ENCODE measurements at regions of chr3 and their contacts with region 1.

Region 1: GRCh38 chr3:78659386-78659987 is 1108.3 kb downstream of the ROBO1 start:
- DNase-seq: peak; percentile 57
- ATAC-seq: no peak
- H3K4me3 ChIP-seq: no peak overlapping the region
- H3K27ac ChIP-seq: no peak overlapping the region
- H3K4me1 ChIP-seq: no peaks in the 10 kb centered on the region
- H3K27me3 ChIP-seq: no peaks in the 10 kb centered on the region
- CTCF ChIP-seq: peak; percentile 71
- POLR2A ChIP-seq: no peak
- RAD21 ChIP-seq: peak; percentile 77

Region 2: DNA sequence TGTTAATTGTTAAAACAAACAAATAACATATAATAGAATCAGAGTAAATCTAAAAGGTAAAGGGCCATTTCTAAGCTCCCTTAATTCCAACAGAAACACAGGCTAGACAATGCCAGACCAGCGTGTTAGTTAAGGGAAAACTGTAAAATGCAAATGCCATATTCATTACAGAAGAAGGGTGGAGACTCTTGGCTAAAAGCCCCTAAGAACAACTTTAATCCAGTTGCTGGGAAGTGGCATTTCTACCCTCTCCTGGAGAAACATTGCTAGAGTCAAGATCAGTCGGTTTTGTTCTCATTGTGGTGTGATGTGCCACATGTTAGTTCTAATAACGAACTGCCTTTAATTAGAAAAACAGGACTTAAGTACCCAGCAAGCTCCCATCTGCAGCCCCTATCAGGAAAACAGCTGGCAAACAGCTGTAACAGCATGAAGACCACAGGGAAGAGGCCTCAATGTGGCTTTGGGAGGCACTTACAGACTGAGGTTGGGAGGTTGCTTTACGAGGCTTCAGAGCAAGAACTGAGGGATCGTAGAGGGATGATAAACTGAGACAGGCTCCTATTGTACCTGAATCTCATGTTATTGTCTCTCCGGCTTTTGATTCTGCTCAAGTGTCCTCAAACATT is 26.4 kb before region 1 on chr3:
- CTCF ChIA-PET with region 1: no interaction called
- POLR2A ChIA-PET with region 1: interaction called, 11 read pairs
- dilution Hi-C with region 1: no loop called
- in situ Hi-C with region 1: no loop called
- intact Hi-C with region 1: no loop called
- DNase-seq: no peak
- ATAC-seq: no peak
- H3K4me3 ChIP-seq: no peak overlapping the region
- H3K27ac ChIP-seq: no peak overlapping the region
- H3K4me1 ChIP-seq: no peaks in the 10 kb centered on the region; the same call in 1 of the 2 replicates
- H3K27me3 ChIP-seq: no peaks in the 10 kb centered on the region
- CTCF ChIP-seq: no peak
- POLR2A ChIP-seq: no peak
- RAD21 ChIP-seq: no peak

Region 3: GRCh38 chr3:78754066-78754743 is 94.7 kb after region 1 on chr3:
- CTCF ChIA-PET with region 1: no interaction called
- POLR2A ChIA-PET with region 1: no interaction called
- dilution Hi-C with region 1: no loop called
- in situ Hi-C with region 1: no loop called
- intact Hi-C with region 1: no loop called
- DNase-seq: peak; percentile 73
- ATAC-seq: peak; percentile 78
- H3K4me3 ChIP-seq: no peak overlapping the region
- H3K27ac ChIP-seq: no peak overlapping the region
- H3K4me1 ChIP-seq: peaks cover 3% of the 10 kb centered on the region; the same call in 1 of the 2 replicates
- H3K27me3 ChIP-seq: no peaks in the 10 kb centered on the region
- CTCF ChIP-seq: no peak
- POLR2A ChIP-seq: no peak
- RAD21 ChIP-seq: no peak

Region 4: DNA sequence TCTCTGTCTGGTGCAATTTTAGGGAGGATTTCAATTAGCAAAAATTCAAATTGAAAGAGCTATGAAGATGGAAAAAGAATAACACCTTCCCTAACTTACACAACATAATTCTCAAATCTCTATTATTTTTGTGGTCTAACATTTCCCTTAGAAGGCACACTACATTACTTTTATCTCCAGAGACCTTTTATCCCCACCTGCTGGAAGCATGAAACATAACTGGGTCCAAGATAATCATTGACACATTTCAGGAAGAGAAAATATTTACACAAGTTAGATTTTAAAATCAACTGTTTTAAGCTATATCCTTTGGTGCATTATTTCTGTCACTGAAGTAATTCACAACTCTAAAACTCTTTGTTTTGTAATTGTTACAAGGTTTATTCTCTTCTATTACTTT is 328.8 kb after region 1 on chr3:
- CTCF ChIA-PET with region 1: interaction called, 4 read pairs
- POLR2A ChIA-PET with region 1: no interaction called
- dilution Hi-C with region 1: no loop called
- in situ Hi-C with region 1: loop called (anchors 25 kb)
- intact Hi-C with region 1: no loop called
- DNase-seq: peak; percentile 46
- ATAC-seq: peak; percentile 49
- H3K4me3 ChIP-seq: no peak overlapping the region
- H3K27ac ChIP-seq: no peak overlapping the region
- H3K4me1 ChIP-seq: no peaks in the 10 kb centered on the region
- H3K27me3 ChIP-seq: no peaks in the 10 kb centered on the region
- CTCF ChIP-seq: peak; percentile 54
- POLR2A ChIP-seq: no peak
- RAD21 ChIP-seq: peak; percentile 61

Region 5: GRCh38 chr3:79027593-79027992 is 368.1 kb after region 1 on chr3:
- CTCF ChIA-PET with region 1: no interaction called
- POLR2A ChIA-PET with region 1: no interaction called
- dilution Hi-C with region 1: no loop called
- in situ Hi-C with region 1: loop called (anchors 5 kb)
- intact Hi-C with region 1: loop called (anchors 1 kb)
- DNase-seq: no peak
- ATAC-seq: no peak
- H3K4me3 ChIP-seq: no peak overlapping the region
- H3K27ac ChIP-seq: no peak overlapping the region
- H3K4me1 ChIP-seq: peaks cover 2% of the 10 kb centered on the region; the same call in 1 of the 2 replicates
- H3K27me3 ChIP-seq: no peaks in the 10 kb centered on the region
- CTCF ChIP-seq: no peak
- POLR2A ChIP-seq: no peak
- RAD21 ChIP-seq: no peak

Region 6: DNA sequence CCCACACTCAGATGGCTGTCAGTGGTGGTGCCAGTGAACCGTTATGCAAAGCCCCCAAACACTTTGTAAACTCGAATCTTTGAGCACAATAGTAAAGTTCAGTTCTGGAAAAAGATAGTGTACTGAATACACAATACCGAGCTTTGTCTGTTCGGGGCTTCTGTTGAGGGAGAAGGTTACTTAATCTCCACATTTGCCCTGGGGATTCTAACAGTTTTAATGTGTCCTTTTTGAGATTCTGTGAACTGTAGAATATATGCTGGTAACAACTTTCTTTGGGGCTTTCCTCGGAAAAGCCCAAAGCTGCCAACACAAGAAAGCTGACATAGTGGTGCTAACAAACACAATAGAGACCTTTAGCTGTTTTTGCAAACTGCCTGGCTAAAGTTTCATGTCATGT is 421.8 kb after region 1 on chr3:
- CTCF ChIA-PET with region 1: interaction called, 4 read pairs
- POLR2A ChIA-PET with region 1: no interaction called
- dilution Hi-C with region 1: no loop called
- in situ Hi-C with region 1: no loop called
- intact Hi-C with region 1: loop called (anchors 5 kb)
- DNase-seq: no peak
- ATAC-seq: no peak
- H3K4me3 ChIP-seq: no peak overlapping the region
- H3K27ac ChIP-seq: no peak overlapping the region
- H3K4me1 ChIP-seq: peaks cover 3% of the 10 kb centered on the region; the same call in 1 of the 2 replicates
- H3K27me3 ChIP-seq: no peaks in the 10 kb centered on the region
- CTCF ChIP-seq: no peak
- POLR2A ChIP-seq: no peak
- RAD21 ChIP-seq: no peak

Region 7: DNA sequence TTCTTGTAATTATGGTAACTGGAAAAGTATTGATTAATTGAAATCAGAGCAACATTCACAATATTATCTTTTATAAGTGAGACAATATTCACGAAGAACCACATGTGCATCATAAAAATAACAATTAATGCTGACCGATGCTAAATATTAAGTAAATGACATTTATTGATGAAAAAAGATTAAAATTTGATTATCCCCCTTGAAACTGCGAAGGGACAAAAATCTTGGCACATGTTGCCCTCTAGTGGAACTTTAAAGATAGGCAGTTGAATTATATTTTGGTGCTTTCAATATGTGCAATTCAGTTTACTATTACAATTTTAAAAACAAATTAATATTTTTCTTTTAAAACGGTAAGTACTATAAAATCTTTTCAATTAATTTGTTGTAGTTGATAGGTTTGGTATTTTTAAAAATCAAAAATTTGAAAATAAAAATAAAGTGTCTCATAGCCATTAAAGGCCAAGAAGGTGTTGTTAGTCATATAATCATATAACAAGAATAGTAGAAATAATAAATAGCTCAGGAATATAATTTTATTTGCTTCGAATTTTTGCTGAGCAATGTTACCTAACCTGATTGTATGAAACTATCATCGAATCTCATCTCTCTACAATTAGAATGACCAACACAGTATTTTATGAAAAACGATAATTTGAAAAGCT is 838.1 kb after region 1 on chr3:
- CTCF ChIA-PET with region 1: no interaction called
- POLR2A ChIA-PET with region 1: no interaction called
- dilution Hi-C with region 1: no loop called
- in situ Hi-C with region 1: loop called (anchors 25 kb)
- intact Hi-C with region 1: loop called (anchors 5 kb)
- DNase-seq: peak; percentile 11
- ATAC-seq: 0 out of 2 replicates have a peak, but pooled peaks have one; percentile 21
- H3K4me3 ChIP-seq: no peak overlapping the region
- H3K27ac ChIP-seq: no peak overlapping the region
- H3K4me1 ChIP-seq: no peaks in the 10 kb centered on the region
- H3K27me3 ChIP-seq: no peaks in the 10 kb centered on the region
- CTCF ChIP-seq: peak; percentile 73
- POLR2A ChIP-seq: no peak
- RAD21 ChIP-seq: peak; percentile 59